ENCODE measurements at regions of chr21 and their contacts with region 1.

Region 1: DNA sequence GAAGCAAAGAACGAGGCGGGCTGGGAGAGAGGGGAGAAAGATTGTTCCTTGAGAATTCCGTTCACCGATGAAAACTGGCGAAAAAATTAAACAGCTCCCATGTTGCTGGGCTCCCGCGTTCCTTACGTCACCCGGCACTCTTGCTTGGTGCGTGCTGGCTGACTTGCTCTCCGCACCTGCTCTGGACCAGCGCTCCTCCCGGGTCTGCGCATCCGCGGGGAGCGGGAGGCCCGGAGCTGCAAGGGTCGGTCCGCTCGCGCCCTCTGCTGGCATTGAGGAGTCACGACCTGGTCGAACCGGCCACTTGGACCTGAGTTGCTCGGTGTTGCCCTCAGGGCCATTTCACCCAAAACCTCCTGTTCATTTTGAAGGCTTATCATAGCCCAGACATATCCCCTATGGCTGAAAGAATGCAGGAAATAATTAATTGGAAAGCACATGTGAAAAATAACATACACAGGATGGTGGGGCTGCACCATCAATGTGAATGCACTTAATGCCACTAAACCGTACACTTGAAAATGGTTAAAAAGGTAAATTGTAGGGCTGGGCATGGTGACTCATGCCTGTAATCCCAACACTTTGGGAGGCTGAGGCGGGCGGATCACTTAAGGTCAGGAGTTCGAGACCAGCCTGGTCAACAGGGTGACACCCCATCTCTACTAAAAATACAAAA is 98.9 kb upstream of the BACE2 start:
- DNase-seq: peak; percentile 74
- H3K4me3 ChIP-seq: no peak overlapping the region
- H3K27ac ChIP-seq: no peak overlapping the region
- H3K4me1 ChIP-seq: peaks cover 0 to 4% (median 0%) of the 10 kb centered on the region in 4 donors
- H3K27me3 ChIP-seq: peaks cover 37% of the 10 kb centered on the region
- CTCF ChIP-seq: peak; percentile 70 to 85 (median 78)
- EP300 ChIP-seq: no peak
- POLR2A ChIP-seq: no peak

Region 2: GRCh38 chr21:40143822-40144525 is 925.1 kb before region 1 on chr21:
- in situ Hi-C with region 1: loop called in 1 of 4 experiments (anchors 25 kb)
- intact Hi-C with region 1: no loop called
- DNase-seq: peak; percentile 41
- H3K4me3 ChIP-seq: no peak overlapping the region
- H3K27ac ChIP-seq: no peak overlapping the region
- H3K4me1 ChIP-seq: no peaks in the 10 kb centered on the region
- H3K27me3 ChIP-seq: no peaks in the 10 kb centered on the region
- CTCF ChIP-seq: peak; percentile 68 to 78 (median 71)
- EP300 ChIP-seq: no peak
- POLR2A ChIP-seq: no peak

Region 3: GRCh38 chr21:40166291-40166850 is 902.7 kb before region 1 on chr21:
- in situ Hi-C with region 1: loop called in 2 of 4 experiments (anchors 25 kb)
- intact Hi-C with region 1: no loop called
- DNase-seq: no peak
- H3K4me3 ChIP-seq: no peak overlapping the region
- H3K27ac ChIP-seq: no peak overlapping the region
- H3K4me1 ChIP-seq: no peaks in the 10 kb centered on the region
- H3K27me3 ChIP-seq: no peaks in the 10 kb centered on the region
- CTCF ChIP-seq: no peak
- EP300 ChIP-seq: no peak
- POLR2A ChIP-seq: no peak

Region 4: DNA sequence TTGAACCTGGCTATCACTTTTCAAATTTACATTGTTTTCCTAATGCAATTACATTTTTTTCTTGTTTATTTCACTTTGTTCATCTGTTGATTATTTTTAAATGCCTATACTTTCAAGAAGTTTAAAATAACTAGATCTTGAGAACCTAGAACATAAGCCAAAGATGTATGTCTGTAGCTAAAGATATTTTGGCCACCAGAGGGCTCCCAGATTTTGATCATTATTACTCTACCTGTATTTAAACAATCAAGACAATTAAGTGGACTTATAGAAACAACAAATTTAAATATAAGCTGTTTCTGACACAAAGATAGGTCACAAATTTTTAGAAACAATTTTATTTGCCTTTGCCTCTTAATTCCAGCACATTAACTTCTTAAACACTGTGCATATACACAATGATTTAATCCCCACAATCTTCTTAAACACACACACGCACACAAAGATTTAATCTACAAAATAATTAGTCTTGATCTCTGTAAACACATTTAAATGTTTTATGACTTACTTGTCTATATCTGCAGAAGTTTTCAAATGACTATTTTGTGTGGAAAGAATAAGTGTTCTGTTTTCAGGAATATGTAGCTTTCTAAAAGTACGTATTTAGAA is 602.1 kb before region 1 on chr21:
- in situ Hi-C with region 1: loop called (anchors 25 kb)
- intact Hi-C with region 1: loop called (anchors 2 kb)
- DNase-seq: no peak
- H3K4me3 ChIP-seq: no peak overlapping the region
- H3K27ac ChIP-seq: no peak overlapping the region
- H3K4me1 ChIP-seq: no peaks in the 10 kb centered on the region
- H3K27me3 ChIP-seq: no peaks in the 10 kb centered on the region
- CTCF ChIP-seq: peak in 4 of 5 experiments; percentile 17 to 37 (median 26)
- EP300 ChIP-seq: no peak
- POLR2A ChIP-seq: no peak

Region 5: GRCh38 chr21:41043014-41043413 is 26.1 kb before region 1 on chr21:
- in situ Hi-C with region 1: no loop called
- intact Hi-C with region 1: no loop called
- DNase-seq: no peak
- H3K4me3 ChIP-seq: no peak overlapping the region
- H3K27ac ChIP-seq: no peak overlapping the region
- H3K4me1 ChIP-seq: no peaks in the 10 kb centered on the region
- H3K27me3 ChIP-seq: peaks cover 21% of the 10 kb centered on the region
- CTCF ChIP-seq: no peak
- EP300 ChIP-seq: no peak
- POLR2A ChIP-seq: no peak

Region 6: GRCh38 chr21:41133896-41134522 is 64.9 kb after region 1 on chr21:
- in situ Hi-C with region 1: no loop called
- intact Hi-C with region 1: loop called (anchors 10 kb)
- DNase-seq: no peak
- H3K4me3 ChIP-seq: no peak overlapping the region
- H3K27ac ChIP-seq: no peak overlapping the region
- H3K4me1 ChIP-seq: no peaks in the 10 kb centered on the region
- H3K27me3 ChIP-seq: no peaks in the 10 kb centered on the region
- CTCF ChIP-seq: peak in 4 of 5 experiments; percentile 25 to 44 (median 38)
- EP300 ChIP-seq: no peak
- POLR2A ChIP-seq: no peak

Region 7: DNA sequence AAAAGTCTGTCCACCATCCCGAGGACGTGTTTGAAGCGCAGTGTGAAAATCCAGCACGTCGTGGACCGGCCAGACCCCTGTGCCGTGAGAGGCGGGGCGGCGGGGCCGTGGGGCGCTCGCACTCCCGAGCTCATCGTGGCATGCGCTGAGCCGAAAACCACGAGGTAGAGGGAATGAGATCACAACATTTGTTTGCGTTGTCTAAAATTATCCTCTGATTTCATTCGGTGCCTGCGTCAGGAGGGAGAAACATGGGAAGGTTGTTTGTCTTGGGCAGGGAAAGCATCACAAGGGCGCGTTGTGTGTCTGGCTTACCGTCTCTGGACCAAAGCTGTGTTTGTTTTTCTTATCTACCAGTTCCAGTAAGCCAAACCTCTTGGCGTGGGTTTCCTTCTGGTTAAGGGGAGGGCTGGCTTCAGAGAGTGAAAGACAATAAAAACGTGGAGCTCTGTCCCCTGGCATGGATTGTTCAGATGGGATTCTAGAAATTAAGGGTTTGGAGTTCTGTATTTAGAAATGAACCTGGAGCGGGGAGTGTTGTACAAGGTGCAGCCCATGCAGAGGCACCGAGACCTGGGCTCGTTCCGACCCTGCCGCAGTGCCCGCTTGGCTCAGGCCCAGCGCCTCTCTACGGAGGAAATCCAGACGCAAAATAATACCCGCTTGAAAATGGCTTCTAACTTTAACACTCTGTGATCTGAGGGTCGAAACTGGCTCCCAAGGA is 178.6 kb after region 1 on chr21:
- in situ Hi-C with region 1: no loop called
- intact Hi-C with region 1: no loop called
- DNase-seq: peak; percentile 57
- H3K4me3 ChIP-seq: no peak overlapping the region
- H3K27ac ChIP-seq: peak overlapping the region in 2 of 4 donors; percentile 11 to 42
- H3K4me1 ChIP-seq: peaks cover 0 to 7% (median 6%) of the 10 kb centered on the region in 4 donors
- H3K27me3 ChIP-seq: no peaks in the 10 kb centered on the region
- CTCF ChIP-seq: no peak
- EP300 ChIP-seq: no peak
- POLR2A ChIP-seq: no peak

Measured in transverse colon (tissue), 4 donors.